ENCODE measurements at regions of chr10 and their contacts with region 1.

Region 1: DNA sequence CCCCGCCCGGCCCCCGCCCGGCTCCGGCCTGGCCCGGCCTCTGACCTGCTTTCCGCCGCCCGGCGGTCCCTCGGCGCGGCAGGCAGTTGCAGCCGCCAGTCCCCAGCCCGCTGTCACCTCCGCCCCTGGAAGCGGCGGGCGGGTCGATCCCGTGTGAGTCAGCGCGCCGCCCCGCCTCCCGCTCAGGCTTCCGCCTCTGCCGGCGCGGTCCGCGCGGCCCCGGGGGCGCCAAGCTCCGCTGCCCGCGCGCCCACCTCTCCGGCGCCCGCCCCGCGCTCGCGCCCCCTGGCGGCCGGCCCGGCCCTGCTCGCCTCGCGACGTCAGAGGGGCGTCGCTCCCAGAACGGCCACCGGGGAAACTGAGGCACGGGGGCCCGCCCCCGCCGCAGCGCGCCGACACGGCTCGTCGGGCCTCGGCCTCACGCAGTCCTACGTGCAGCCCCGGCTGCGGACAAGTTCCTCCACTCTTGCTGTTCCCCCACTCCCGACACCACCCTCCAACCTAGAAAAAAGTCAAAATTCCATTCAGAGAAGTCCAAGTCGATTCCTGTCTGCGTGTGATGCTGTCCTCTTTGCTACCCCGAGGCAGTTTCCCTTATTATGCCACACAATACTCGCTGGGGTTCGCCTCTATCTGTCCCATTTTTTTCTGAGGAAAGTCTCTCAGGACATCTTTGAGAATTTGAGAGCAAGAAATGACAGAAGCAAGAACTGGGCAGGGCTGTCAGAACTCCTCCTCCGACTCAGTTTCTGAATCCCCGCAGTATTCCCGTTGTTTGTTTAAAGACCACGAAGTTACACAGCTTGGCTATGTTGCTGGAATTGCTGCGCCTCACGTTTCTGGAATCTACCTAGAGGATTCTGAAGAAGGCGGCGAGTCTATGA is at the start of gene DNMBP:
- DNase-seq: peak; percentile 75
- H3K4me3 ChIP-seq: peak within 1 kb of the TSS; percentile 75 to 88 (median 77)
- H3K27ac ChIP-seq: peak within 1 kb of the TSS; percentile 69
- H3K4me1 ChIP-seq: peaks cover 33% of the 10 kb centered on the region
- H3K27me3 ChIP-seq: no peaks in the 10 kb centered on the region
- CTCF ChIP-seq: peak; percentile 9 to 26
- total RNA-seq, gene DNMBP: 8.7 to 17.6 TPM

Region 2: GRCh38 chr10:99732033-99732912 is 277.8 kb before region 1 on chr10 and contains the starts of genes COX15 and CUTC:
- CTCF ChIA-PET with region 1: no interaction called
- dilution Hi-C with region 1: no loop called
- in situ Hi-C with region 1: no loop called
- intact Hi-C with region 1: loop called (anchors 2 kb)
- DNase-seq: peak; percentile 95
- H3K4me3 ChIP-seq: peak within 1 kb of the TSS; percentile 67 to 78 (median 74)
- H3K27ac ChIP-seq: peak within 1 kb of the TSS; percentile 83
- H3K4me1 ChIP-seq: peaks cover 13% of the 10 kb centered on the region
- H3K27me3 ChIP-seq: no peaks in the 10 kb centered on the region
- CTCF ChIP-seq: peak; percentile 43 to 63
- total RNA-seq, gene COX15: 26.5 to 29.5 TPM
- total RNA-seq, gene CUTC: 8.2 to 14.7 TPM

Region 3: GRCh38 chr10:99913831-99914235 is 96.2 kb before region 1 on chr10:
- CTCF ChIA-PET with region 1: no interaction called
- dilution Hi-C with region 1: no loop called
- in situ Hi-C with region 1: no loop called
- intact Hi-C with region 1: loop called (anchors 2 kb)
- DNase-seq: no peak
- H3K4me3 ChIP-seq: peak overlapping the region; percentile 3 to 40 (median 35)
- H3K27ac ChIP-seq: peak overlapping the region; percentile 27
- H3K4me1 ChIP-seq: peaks cover 23% of the 10 kb centered on the region
- H3K27me3 ChIP-seq: no peaks in the 10 kb centered on the region
- CTCF ChIP-seq: peak; percentile 19 to 58

Region 4: DNA sequence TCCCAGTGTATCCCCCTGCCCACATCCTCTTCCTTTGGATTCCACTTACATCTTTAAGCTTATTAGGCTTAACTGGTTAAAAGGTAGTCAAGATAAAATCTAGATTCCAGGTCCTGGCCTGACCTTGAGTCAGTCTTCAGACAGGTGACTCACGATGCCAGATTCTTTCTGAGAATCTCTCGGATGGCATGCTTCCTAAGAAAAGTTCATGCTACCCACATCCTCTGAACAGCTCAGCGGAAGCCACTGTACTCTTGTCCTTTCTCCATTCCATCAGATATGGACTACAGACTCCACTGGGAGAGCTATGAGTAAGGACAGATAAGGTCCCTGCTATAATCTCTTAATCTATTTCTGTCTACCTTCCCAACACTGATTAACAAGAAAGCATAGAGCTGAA is 43.7 kb before region 1 on chr10:
- CTCF ChIA-PET with region 1: no interaction called
- dilution Hi-C with region 1: no loop called
- in situ Hi-C with region 1: no loop called
- intact Hi-C with region 1: loop called (anchors 5 kb)
- DNase-seq: peak; percentile 95
- H3K4me3 ChIP-seq: no peak overlapping the region
- H3K27ac ChIP-seq: peak overlapping the region; percentile 53
- H3K4me1 ChIP-seq: peaks cover 43% of the 10 kb centered on the region
- H3K27me3 ChIP-seq: no peaks in the 10 kb centered on the region
- CTCF ChIP-seq: no peak

Region 5: DNA sequence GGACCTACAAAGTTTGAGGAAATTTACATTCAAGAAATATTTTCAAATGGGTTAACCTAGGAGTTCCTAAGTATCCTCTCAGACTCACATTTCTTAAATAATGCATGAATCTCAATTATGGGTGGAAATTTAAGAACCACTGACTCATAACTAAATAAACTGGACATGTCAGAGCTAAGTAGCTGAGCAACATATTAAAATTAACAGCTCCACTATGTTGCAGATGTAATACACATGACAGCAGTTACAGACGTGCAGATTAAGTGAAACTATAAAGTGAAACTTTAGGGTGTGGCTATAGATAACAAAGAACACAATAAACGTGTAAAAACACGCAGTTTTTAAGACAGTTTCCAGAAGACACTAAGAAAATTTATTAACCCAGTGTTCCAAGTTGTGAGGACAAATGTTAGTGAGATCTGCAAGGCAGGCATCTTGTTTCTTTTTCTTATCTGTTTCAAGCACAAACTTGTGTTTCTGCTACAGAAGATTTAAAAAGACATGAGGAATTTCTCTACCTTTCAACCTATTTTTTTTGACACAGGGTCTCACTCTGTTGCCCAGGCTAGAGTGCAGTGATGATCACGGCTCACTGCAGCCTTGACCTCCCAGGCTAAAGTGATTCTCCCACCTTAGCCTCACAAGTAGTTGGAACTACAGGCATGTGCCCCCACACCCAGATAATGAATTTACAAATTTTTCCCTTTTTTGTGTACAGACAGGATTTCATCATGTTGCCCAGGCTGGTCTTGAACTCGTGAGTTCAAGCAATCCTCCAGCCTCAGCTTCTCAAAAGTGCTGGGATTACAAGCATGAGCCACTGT is 25.6 kb before region 1 on chr10:
- CTCF ChIA-PET with region 1: no interaction called
- dilution Hi-C with region 1: no loop called
- in situ Hi-C with region 1: no loop called
- intact Hi-C with region 1: loop called (anchors 1 kb)
- DNase-seq: peak; percentile 84
- H3K4me3 ChIP-seq: peak overlapping the region in 2 of 3 experiments; percentile 4 to 19
- H3K27ac ChIP-seq: peak overlapping the region; percentile 96
- H3K4me1 ChIP-seq: peaks cover 21% of the 10 kb centered on the region
- H3K27me3 ChIP-seq: no peaks in the 10 kb centered on the region
- CTCF ChIP-seq: no peak

Region 6: DNA sequence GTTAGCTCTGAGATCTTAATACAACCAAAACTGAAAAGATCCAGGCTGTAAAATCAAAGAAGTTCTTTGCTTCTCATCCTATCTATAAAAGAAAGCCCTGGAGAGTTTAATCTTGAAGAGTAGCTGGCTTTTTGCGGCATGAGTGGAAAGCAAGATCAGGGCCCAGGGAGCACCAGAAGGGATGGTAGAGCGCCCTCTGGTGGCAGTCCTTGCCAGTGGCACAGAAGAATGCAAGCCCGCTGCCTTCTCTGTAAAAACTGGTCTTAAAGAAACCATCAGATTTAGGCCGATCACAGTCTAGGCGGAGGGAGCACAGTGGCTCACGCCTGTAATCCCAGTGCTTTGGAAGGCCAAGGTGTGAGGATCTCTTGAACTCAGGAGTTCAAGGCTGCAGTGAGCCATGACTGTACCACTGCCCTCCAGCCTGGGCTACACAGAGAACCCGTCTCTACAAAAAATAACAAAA is 36.0 kb after region 1 on chr10:
- CTCF ChIA-PET with region 1: interaction called, 4 read pairs
- dilution Hi-C with region 1: no loop called
- in situ Hi-C with region 1: loop called in 1 of 2 experiments (anchors 5 kb)
- intact Hi-C with region 1: loop called (anchors 1 kb)
- DNase-seq: peak; percentile 69
- H3K4me3 ChIP-seq: no peak overlapping the region
- H3K27ac ChIP-seq: no peak overlapping the region
- H3K4me1 ChIP-seq: peaks cover 29% of the 10 kb centered on the region
- H3K27me3 ChIP-seq: no peaks in the 10 kb centered on the region
- CTCF ChIP-seq: peak; percentile 95 to 96

Region 7: GRCh38 chr10:100065084-100065660 is 55.1 kb after region 1 on chr10:
- CTCF ChIA-PET with region 1: no interaction called
- dilution Hi-C with region 1: no loop called
- in situ Hi-C with region 1: no loop called
- intact Hi-C with region 1: no loop called
- DNase-seq: no peak
- H3K4me3 ChIP-seq: no peak overlapping the region
- H3K27ac ChIP-seq: no peak overlapping the region
- H3K4me1 ChIP-seq: no peaks in the 10 kb centered on the region
- H3K27me3 ChIP-seq: no peaks in the 10 kb centered on the region
- CTCF ChIP-seq: no peak

Measured in mammary epithelial cell (primary cell).